ENCODE measurements at regions of chr17 and their contacts with region 1.

Region 1: DNA sequence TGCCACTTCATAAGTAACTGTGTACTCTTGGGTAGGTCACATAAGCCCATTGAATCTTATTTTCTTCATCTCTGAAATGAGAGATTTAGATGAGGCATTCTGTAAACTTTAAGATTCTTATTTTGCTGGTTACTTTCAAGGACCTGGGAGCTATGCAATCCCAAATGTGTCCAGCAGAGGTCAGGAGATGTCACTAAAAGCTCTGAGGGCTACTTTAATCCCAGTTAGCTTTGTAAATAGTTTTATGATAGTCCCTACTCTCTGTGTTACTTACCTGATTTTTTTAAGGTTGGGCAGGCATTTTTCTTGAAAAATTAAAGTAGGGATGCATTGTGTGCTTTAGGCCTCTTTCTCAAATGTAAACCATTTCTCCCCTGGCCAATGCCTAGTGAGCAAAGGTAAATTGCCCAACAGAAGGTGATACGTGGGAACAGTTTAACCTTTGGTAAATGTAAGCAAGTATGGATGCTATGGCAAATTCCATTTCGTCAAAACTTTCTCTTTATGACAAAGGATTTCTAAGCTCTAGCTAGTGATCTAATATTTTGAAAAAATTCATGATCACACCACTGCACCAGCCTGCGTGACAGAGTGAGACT is 57.1 kb upstream of the WSB1 start:
- DNase-seq: peak; percentile 78 to 89 (median 81)
- H3K4me3 ChIP-seq: no peak overlapping the region
- H3K27ac ChIP-seq: no peak overlapping the region
- H3K4me1 ChIP-seq: peaks cover 0 to 7% (median under 1%) of the 10 kb centered on the region in 4 experiments
- H3K27me3 ChIP-seq: no peaks in the 10 kb centered on the region

Region 2: GRCh38 chr17:27153005-27153404 is 83.8 kb before region 1 on chr17:
- CTCF ChIA-PET with region 1: no interaction called
- POLR2A ChIA-PET with region 1: no interaction called
- DNase-seq: no peak
- H3K4me3 ChIP-seq: no peak overlapping the region
- H3K27ac ChIP-seq: no peak overlapping the region
- H3K4me1 ChIP-seq: no peaks in the 10 kb centered on the region
- H3K27me3 ChIP-seq: no peaks in the 10 kb centered on the region

Region 3: DNA sequence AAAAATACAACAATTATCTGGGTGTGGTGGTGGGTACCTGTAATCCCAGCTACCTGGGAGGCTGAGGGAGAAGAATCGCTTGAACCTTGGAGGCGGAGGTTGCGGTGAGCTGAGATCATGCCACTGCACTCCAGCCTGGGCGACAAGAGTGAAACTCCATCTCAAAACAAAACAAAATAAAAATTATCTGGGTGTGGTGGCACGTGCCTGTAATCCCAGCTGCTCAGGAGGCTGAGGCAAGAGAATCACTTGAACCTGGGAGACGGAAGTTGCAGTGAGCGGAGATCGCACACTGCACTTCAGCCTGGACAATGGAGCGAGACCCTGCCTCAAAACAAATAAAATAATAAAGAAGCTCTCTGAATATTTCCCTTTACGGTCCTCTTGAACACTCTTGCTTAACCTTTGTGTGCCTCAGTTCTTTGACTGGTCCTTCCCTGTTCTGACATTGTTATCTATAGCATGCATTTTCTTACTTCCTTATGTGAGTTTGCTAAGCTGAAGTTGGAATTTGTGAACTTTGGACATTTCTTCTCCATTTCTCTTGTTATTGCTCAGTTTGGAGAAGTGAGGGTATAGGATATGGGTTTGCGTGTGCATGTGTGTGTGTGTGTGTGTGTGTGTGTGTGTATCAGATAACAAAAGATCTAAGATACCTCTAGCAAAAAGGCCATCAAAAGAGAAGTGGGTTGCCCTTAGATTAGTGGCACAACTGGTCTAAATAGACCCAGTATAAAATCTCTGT is 27.4 kb after region 1 on chr17:
- CTCF ChIA-PET with region 1: interaction called, 11 read pairs
- POLR2A ChIA-PET with region 1: interaction called, 3 read pairs
- DNase-seq: peak in 2 of 3 donors; percentile 33 to 55
- H3K4me3 ChIP-seq: no peak overlapping the region
- H3K27ac ChIP-seq: no peak overlapping the region
- H3K4me1 ChIP-seq: no peaks in the 10 kb centered on the region
- H3K27me3 ChIP-seq: no peaks in the 10 kb centered on the region

Region 4: GRCh38 chr17:27293359-27293897 is 56.6 kb after region 1 on chr17:
- CTCF ChIA-PET with region 1: interaction called, 11 read pairs
- POLR2A ChIA-PET with region 1: no interaction called
- DNase-seq: no peak
- H3K4me3 ChIP-seq: peak overlapping the region in 6 of 7 experiments; percentile 46 to 100 (median 96)
- H3K27ac ChIP-seq: peak overlapping the region; percentile 95 to 99
- H3K4me1 ChIP-seq: peaks cover 11 to 35% (median 24%) of the 10 kb centered on the region in 4 experiments
- H3K27me3 ChIP-seq: no peaks in the 10 kb centered on the region

Region 5: GRCh38 chr17:27319536-27320221 is 82.9 kb after region 1 on chr17:
- CTCF ChIA-PET with region 1: interaction called, 21 read pairs
- POLR2A ChIA-PET with region 1: no interaction called
- DNase-seq: peak in 2 of 3 donors; percentile 25 to 45
- H3K4me3 ChIP-seq: no peak overlapping the region
- H3K27ac ChIP-seq: no peak overlapping the region
- H3K4me1 ChIP-seq: peaks cover 0 to 5% (median 1%) of the 10 kb centered on the region in 4 experiments
- H3K27me3 ChIP-seq: no peaks in the 10 kb centered on the region

Measured in common myeloid progenitor, CD34-positive (primary cell).